Activated B cell treated with CpG ODN at 0.5 μM for 24 hours (primary cell): ENCODE measurements at regions of chr14 and their contacts with region 1.

Region 1: GRCh38 chr14:77862154-77862786 is 62.4 kb downstream of the ADCK1 start:
- DNase-seq: peak; percentile 67
- ATAC-seq: peak; percentile 58
- H3K4me3 Mint-ChIP-seq: no peak overlapping the region
- H3K27ac Mint-ChIP-seq: no peak overlapping the region
- H3K4me1 Mint-ChIP-seq: no peaks in the 10 kb centered on the region
- H3K27me3 Mint-ChIP-seq: no peaks in the 10 kb centered on the region
- CTCF ChIP-seq: peak; percentile 83

Region 2: DNA sequence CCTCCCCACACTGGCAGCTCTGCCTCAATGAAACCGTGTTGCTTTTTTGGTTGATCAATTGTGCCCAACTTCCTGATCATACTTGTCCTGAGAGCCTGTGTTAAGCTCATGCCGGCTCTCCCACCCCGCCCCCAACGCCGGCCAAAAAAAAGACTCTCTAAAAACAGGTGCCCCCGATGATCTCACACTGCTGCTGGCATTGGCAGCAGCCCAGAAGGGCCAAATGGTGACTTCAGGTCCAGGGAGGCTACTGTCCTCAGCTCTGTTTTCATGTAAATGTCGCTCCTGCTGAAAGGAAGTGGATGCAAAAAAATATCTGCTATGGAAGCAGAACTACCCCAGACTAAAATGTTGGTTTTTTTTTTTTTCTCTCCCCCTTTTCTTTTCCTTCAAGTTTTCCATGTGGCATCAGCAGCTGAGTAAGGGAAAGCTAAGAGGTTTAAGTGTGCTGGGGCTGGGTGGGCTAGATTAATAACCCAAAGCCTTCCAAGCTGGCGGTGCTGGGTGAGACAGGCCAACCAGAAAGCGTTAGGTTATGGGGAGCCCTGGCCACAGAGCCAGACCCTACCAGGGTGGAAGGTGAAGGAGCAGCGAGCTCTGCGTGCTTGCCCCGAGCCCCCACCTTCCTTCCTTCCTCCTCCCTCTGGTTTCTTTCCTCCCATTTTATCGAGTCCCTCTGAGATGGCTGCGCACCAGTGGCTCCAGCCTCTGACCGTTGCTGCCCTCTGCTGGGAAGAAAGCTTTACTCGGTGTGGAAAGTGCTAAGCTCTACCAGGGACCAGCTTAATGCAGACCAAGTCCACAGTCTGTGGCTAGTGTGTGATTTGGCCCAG is 704.0 kb after region 1 on chr14:
- CTCF ChIA-PET with region 1: interaction called, 13 read pairs
- POLR2A ChIA-PET with region 1: no interaction called
- intact Hi-C with region 1: loop called (anchors 1 kb)
- DNase-seq: peak; percentile 15
- ATAC-seq: peak; percentile 50
- H3K4me3 Mint-ChIP-seq: no peak overlapping the region
- H3K27ac Mint-ChIP-seq: no peak overlapping the region
- H3K4me1 Mint-ChIP-seq: no peaks in the 10 kb centered on the region
- H3K27me3 Mint-ChIP-seq: no peaks in the 10 kb centered on the region
- CTCF ChIP-seq: no peak

Region 3: DNA sequence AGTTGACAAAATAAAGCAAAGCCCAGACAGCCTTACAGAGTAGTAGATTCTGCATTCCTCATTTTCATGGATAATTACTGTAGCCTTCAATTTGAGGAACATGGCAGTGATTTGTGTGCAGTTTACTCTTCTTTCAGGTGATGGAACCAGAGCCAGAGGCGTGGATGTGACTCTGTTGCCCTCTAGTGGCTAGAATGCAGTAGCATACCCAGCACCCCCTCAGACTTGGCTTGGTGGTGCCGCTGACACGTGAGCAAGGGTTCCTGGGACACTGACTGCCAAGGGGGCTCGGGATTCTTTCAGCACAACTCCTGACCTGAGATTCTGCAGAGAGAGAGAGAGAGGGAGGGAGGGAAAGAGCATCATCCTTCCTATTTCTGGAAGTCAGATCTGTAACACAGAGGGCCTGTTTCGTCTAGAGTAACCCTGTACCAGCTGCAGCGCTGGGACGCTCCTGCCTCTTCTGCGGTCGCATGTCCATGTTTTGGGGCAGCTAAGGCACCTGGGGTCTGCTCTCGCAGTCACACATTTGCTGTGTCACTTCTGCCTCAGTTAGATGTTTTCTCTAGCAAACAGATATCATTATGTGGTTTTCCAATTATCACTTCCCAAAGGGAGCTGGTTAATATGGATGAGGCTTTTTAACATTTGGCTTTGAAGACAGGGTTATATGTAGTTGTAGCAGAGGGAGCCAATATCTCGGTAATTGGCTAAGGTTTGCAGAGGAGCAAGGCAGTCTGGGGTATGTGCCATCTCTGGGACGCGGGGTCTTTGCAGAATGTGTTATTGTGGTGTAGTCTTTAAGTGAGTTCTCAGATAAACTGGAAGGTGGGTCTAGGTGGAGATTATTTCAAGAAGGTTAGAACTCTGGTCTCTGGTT is 736.0 kb after region 1 on chr14:
- CTCF ChIA-PET with region 1: interaction called, 10 read pairs
- POLR2A ChIA-PET with region 1: no interaction called
- intact Hi-C with region 1: no loop called
- DNase-seq: peak; percentile 16
- ATAC-seq: peak; percentile 52
- H3K4me3 Mint-ChIP-seq: no peak overlapping the region
- H3K27ac Mint-ChIP-seq: no peak overlapping the region
- H3K4me1 Mint-ChIP-seq: no peaks in the 10 kb centered on the region
- H3K27me3 Mint-ChIP-seq: peaks cover 1% of the 10 kb centered on the region
- CTCF ChIP-seq: peak; percentile 43

Region 4: DNA sequence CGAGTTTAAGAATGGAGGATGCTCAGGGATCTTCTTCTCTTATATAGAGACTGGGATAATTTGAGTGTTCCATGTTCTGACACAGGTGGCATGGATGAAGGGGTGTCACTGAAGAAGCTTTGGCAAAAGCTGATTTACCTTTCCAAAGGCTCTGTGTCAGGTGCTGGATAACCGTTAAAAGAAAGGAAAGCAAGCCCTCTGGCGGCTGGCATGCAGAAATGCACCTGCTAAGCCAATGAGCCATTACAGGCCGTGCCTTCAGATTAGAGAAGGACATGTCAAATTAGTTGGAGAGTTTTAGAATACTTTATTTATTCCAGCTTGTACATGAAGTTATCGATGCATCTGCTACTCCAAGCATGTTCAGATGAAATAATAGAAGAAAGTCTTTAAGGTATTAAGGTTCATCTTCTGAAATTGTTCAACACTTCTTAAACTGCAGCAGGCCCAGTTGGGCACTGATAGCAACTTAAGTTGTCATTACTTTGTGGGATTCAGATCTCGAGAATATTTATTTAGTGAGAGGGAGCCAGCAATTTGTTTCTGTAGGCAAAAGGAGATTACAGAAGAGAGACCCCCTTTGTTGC is 986.1 kb after region 1 on chr14:
- CTCF ChIA-PET with region 1: no interaction called
- POLR2A ChIA-PET with region 1: no interaction called
- intact Hi-C with region 1: loop called (anchors 5 kb)
- DNase-seq: no peak
- ATAC-seq: no peak
- H3K4me3 Mint-ChIP-seq: no peak overlapping the region
- H3K27ac Mint-ChIP-seq: no peak overlapping the region
- H3K4me1 Mint-ChIP-seq: no peaks in the 10 kb centered on the region
- H3K27me3 Mint-ChIP-seq: no peaks in the 10 kb centered on the region
- CTCF ChIP-seq: peak; percentile 30